ENCODE measurements at regions of chr9 and their contacts with region 1.

Region 1: GRCh38 chr9:14888875-14889274 is 21.4 kb downstream of the FREM1 start:
- DNase-seq: no peak
- H3K4me3 Mint-ChIP-seq: no peak overlapping the region
- H3K27ac Mint-ChIP-seq: no peak overlapping the region
- H3K4me1 Mint-ChIP-seq: no peaks in the 10 kb centered on the region
- H3K27me3 Mint-ChIP-seq: no peaks in the 10 kb centered on the region

Region 2: GRCh38 chr9:14909961-14910805 is 21.3 kb after region 1 on chr9 and contains the start of gene FREM1:
- CTCF ChIA-PET with region 1: no interaction called
- intact Hi-C with region 1: no loop called
- DNase-seq: no peak
- H3K4me3 Mint-ChIP-seq: no peak within 1 kb of the TSS
- H3K27ac Mint-ChIP-seq: no peak within 1 kb of the TSS
- H3K4me1 Mint-ChIP-seq: no peaks in the 10 kb centered on the region
- H3K27me3 Mint-ChIP-seq: peaks cover 2% of the 10 kb centered on the region
- total RNA-seq, gene FREM1: not detected

Region 3: GRCh38 chr9:15048772-15049171 is 159.9 kb after region 1 on chr9:
- CTCF ChIA-PET with region 1: no interaction called
- intact Hi-C with region 1: loop called (anchors 5 kb)
- DNase-seq: no peak
- H3K4me3 Mint-ChIP-seq: no peak overlapping the region
- H3K27ac Mint-ChIP-seq: no peak overlapping the region
- H3K4me1 Mint-ChIP-seq: no peaks in the 10 kb centered on the region
- H3K27me3 Mint-ChIP-seq: no peaks in the 10 kb centered on the region